ENCODE measurements at regions of chr2 and their contacts with region 1.

Region 1: DNA sequence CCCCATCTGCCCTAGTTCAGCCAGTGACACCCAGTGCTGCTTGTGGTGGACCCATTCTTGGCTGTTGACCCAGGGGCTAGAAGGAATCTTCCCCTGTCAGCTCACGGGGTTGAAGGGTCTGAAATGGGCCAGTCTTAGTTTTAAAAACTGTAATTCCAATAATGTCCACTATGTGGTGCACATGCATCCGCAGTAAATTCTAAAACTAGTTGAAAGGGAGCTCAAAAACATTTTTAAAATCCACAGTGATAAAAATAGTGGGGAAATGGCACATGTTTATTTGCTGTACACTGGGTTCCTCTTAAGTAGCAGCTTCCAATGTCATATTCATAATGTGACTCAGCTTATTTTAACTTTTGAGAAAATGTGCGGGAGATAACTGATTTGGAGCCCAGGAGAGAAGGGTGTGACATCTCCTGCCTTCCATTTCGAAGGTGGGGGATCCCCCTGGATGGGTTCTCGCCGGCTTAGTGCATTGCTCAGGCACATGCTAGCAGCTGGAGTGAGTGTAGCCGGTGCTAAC is 32.8 kb downstream of the GRHL1 start:
- DNase-seq: no peak
- H3K4me3 ChIP-seq: no peak overlapping the region
- H3K27ac ChIP-seq: peak overlapping the region in 3 of 8 donors; percentile 33 to 46 (median 35)
- H3K4me1 ChIP-seq: peaks cover 0 to 14% (median 9%) of the 10 kb centered on the region in 6 donors
- H3K27me3 ChIP-seq: no peaks in the 10 kb centered on the region
- CTCF ChIP-seq: peak; percentile 60 to 88 (median 78)
- POLR2A ChIP-seq: no peak

Region 2: GRCh38 chr2:10048501-10049171 is 64.4 kb after region 1 on chr2:
- intact Hi-C with region 1: loop called (anchors 5 kb)
- DNase-seq: peak; percentile 72
- H3K4me3 ChIP-seq: peak overlapping the region in 1 of 8 donors; percentile 11
- H3K27ac ChIP-seq: peak overlapping the region in 2 of 8 donors; percentile 12 to 21
- H3K4me1 ChIP-seq: peaks cover 18 to 81% (median 51%) of the 10 kb centered on the region in 6 donors
- H3K27me3 ChIP-seq: no peaks in the 10 kb centered on the region
- CTCF ChIP-seq: peak; percentile 46 to 77 (median 65)
- POLR2A ChIP-seq: no peak

Measured in spleen (tissue), 13 donors.